HepG2 (cell line): ENCODE measurements at regions of chr1 and their contacts with region 1.

Region 1: GRCh38 chr1:179026813-179027669 is 1.3 kb downstream of the FAM20B start:
- DNase-seq: peak; percentile 65
- ATAC-seq: no peak
- H3K4me3 ChIP-seq: peak overlapping the region; percentile 77 to 86 (median 86)
- H3K27ac ChIP-seq: peak overlapping the region; percentile 97
- H3K4me1 ChIP-seq: peaks cover 66% of the 10 kb centered on the region
- H3K27me3 ChIP-seq: no peaks in the 10 kb centered on the region
- CTCF ChIP-seq: no peak
- EP300 ChIP-seq: no peak
- POLR2A ChIP-seq: no peak
- RAD21 ChIP-seq: no peak

Region 2: DNA sequence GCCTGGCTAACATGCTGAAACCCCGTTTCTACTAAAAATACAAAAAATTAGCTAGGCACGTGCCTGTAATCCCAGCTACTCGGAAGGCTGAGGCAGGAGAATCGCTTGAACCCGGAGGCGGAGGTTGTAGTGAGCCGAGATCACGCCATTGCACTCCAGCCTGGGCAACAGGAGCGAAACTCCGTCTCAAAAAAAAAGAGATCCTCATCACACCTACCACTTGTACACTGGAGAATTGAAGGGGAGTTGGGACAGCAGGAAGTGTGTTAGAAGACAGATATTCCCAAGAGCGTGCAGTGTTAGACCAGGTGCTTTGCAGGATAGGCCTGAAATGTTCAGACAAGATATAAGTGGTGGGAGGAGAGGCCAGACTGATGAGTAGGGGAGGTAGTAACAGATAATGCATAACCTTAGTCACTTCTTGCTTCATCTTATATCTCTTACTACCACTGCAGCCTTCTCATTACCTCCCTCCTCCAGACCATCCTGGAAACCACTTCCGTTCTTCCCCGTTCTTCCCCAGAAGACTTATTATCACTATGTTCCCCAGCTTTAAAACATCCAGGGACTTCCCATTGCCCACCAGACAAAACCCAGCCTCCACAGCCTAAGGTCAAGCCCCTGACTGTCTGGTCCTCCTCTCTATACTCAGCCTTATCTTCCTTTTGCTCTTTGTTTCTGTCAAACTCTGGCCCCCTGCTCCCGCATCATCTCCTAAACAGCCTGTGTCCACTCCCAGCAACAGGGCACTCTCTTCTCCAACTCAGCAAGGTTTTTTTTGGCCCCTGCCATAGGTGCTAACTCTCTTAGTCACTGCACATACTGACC is 20.0 kb after region 1 on chr1:
- CTCF ChIA-PET with region 1: no interaction called
- POLR2A ChIA-PET with region 1: interaction called, 3 read pairs
- in situ Hi-C with region 1: no loop called
- intact Hi-C with region 1: loop called (anchors 1 kb)
- DNase-seq: no peak
- ATAC-seq: 0 out of 3 replicates have a peak, but pooled peaks have one; percentile 26
- H3K4me3 ChIP-seq: no peak overlapping the region
- H3K27ac ChIP-seq: peak overlapping the region; percentile 50
- H3K4me1 ChIP-seq: peaks cover 48% of the 10 kb centered on the region
- H3K27me3 ChIP-seq: no peaks in the 10 kb centered on the region
- CTCF ChIP-seq: no peak
- EP300 ChIP-seq: no peak
- POLR2A ChIP-seq: no peak
- RAD21 ChIP-seq: no peak

Region 3: DNA sequence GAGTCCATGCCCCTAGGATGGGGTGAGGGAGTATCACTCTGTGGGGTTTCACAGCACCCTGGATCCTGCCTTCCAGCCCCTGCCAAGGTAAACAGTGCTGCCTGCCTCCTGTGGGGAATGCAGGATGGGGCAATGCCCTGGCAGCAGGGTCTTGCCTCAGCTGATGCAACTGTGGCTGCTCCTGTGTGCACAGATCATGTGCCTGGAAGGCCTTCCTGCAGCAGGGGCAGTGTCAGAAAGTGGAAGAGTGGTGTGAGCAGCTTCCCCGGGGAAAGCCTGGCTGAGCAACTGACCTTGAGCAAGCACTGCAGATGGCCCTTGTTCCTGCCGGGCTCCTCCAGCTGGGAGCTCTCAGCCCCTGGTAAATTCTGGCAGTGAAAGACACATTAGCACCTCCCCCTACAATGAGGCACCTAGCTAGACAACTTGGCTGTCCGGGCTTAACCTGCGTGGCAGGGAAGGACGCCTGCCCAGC is 64.7 kb after region 1 on chr1:
- CTCF ChIA-PET with region 1: no interaction called
- POLR2A ChIA-PET with region 1: no interaction called
- in situ Hi-C with region 1: no loop called
- intact Hi-C with region 1: no loop called
- DNase-seq: peak; percentile 62
- ATAC-seq: peak; percentile 77
- H3K4me3 ChIP-seq: no peak overlapping the region
- H3K27ac ChIP-seq: peak overlapping the region; percentile 62
- H3K4me1 ChIP-seq: peaks cover 42% of the 10 kb centered on the region
- H3K27me3 ChIP-seq: no peaks in the 10 kb centered on the region
- CTCF ChIP-seq: peak; percentile 31
- EP300 ChIP-seq: no peak
- POLR2A ChIP-seq: peak in 1 of 2 experiments; percentile 19; a peak in 1 of 4 replicates
- RAD21 ChIP-seq: 0 out of 2 replicates have a peak, but pooled peaks have one; percentile 26